Activated T-helper 1 cell treated with anti-CD3 and anti-CD28 coated beads, Interleukin-12 subunit alpha, Interleukin-12 subunit beta, Interleukin-2, Interleukin-4 antibody, amounts not matched to agents 30 ng/mL and 10 ng/mL and 1 ng/mL, durations not matched to agents 14 hours and 24 hours and 36 hours (primary cell): ENCODE measurements at regions of chr12 and their contacts with region 1.

Region 1: GRCh38 chr12:89352492-89353187 is at the start of gene DUSP6:
- DNase-seq: peak; percentile 92
- H3K4me3 Mint-ChIP-seq: peak within 1 kb of the TSS; percentile 98
- H3K27ac Mint-ChIP-seq: peak within 1 kb of the TSS; percentile 97
- H3K4me1 Mint-ChIP-seq: peaks cover 46% of the 10 kb centered on the region
- H3K27me3 Mint-ChIP-seq: peaks cover 3% of the 10 kb centered on the region
- total RNA-seq, gene DUSP6: 108 and 115 TPM in 2 replicates

Region 2: GRCh38 chr12:89019408-89020120 is 333.1 kb before region 1 on chr12:
- intact Hi-C with region 1: loop called (anchors 1 kb)
- DNase-seq: peak; percentile 73
- H3K4me3 Mint-ChIP-seq: no peak overlapping the region
- H3K27ac Mint-ChIP-seq: no peak overlapping the region
- H3K4me1 Mint-ChIP-seq: peaks cover 31% of the 10 kb centered on the region
- H3K27me3 Mint-ChIP-seq: peaks cover 12% of the 10 kb centered on the region

Region 3: DNA sequence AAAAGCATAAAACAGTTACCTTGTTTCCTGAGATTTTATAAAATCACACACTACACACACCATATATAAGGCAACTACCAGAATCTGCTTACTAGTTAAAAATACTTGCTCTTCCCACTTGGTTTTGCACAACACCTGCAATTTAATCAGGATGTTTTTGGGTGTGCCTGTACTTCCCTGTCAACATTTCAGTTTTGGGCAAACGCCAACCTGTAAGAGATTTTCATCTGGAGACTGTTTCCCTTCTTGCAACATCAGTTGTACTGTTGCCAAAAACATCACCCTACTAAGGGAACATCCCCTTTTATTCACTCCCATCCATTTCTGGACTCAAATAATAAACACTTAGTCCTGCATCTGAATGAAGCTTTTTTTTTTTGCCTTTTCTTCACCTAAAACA is 172.7 kb before region 1 on chr12:
- intact Hi-C with region 1: loop called (anchors 1 kb)
- DNase-seq: no peak
- H3K4me3 Mint-ChIP-seq: peak overlapping the region; percentile 48
- H3K27ac Mint-ChIP-seq: peak overlapping the region; percentile 95
- H3K4me1 Mint-ChIP-seq: peaks cover 62% of the 10 kb centered on the region
- H3K27me3 Mint-ChIP-seq: no peaks in the 10 kb centered on the region

Region 4: DNA sequence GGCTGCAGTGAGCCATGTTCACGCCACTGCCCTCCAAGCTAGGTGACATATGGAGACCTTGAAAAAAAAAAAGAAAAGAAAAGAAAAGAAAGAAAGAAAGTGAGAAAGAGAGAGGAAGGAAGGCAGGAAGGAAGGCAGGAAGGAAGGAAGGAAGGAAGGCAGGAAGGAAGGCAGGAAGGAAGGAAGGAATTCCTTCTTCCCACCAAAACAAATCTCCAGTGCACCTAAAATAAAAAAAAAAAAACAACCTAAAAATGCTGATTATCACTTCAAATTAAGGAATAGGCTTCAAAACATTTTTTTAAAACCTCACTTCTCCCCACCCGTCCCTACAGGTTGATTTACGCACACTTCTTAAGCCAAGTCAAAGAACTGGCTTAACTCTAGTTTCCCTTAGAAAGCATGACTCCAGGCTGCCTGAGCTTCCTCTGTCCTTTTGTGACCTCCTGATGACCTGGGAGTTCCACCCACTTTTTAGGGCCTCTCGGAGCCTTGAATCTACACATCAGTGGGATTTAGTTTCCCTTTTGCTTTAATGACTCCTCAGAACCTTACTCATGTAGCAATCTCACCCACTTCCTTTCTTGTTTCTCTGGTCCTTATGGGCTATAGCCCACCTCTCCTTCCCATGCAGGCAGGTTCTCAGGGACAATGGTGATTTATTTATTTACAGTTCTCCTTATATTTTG is 18.9 kb before region 1 on chr12:
- intact Hi-C with region 1: loop called (anchors 1 kb)
- DNase-seq: no peak
- H3K4me3 Mint-ChIP-seq: peak overlapping the region; percentile 46
- H3K27ac Mint-ChIP-seq: peak overlapping the region; percentile 76
- H3K4me1 Mint-ChIP-seq: peaks cover 26% of the 10 kb centered on the region
- H3K27me3 Mint-ChIP-seq: no peaks in the 10 kb centered on the region

Region 5: GRCh38 chr12:89461649-89462612 is 109.3 kb after region 1 on chr12:
- intact Hi-C with region 1: loop called (anchors 1 kb)
- DNase-seq: no peak
- H3K4me3 Mint-ChIP-seq: peak overlapping the region; percentile 60
- H3K27ac Mint-ChIP-seq: peak overlapping the region; percentile 36
- H3K4me1 Mint-ChIP-seq: peaks cover 43% of the 10 kb centered on the region
- H3K27me3 Mint-ChIP-seq: no peaks in the 10 kb centered on the region

Region 6: DNA sequence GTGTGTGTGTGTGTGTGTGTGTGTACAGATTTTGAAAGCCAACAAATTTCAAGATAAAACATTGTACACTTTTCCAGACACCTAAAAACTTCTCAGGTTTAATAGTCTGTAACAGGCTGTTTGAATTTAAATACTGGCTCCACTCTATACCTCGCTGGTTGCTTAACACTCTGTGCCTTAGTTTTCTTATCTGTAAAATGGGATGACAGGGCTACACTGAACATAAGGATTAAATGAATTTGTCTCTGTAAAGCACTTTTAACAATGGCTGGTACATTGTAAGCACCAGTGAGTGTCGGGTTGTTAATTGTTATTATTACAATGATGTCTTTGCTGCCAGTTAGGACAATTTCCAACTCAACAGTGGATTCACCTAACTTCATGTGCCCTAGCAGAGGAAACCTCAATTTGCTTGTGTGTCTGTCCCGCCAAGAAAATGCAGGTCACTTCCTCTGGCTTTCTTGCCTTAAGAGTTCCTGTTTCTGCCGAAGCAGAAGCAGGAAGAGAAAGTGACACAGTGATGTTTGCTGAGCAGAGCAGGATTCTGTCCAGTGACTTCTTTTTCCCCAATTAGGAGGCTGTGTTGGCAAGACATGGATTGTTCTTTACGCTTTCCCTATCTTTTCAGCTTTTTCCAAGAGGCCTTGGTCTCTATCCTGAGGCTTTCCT is 510.0 kb after region 1 on chr12:
- intact Hi-C with region 1: loop called (anchors 5 kb)
- DNase-seq: peak; percentile 44
- H3K4me3 Mint-ChIP-seq: peak overlapping the region; percentile 76
- H3K27ac Mint-ChIP-seq: peak overlapping the region; percentile 95
- H3K4me1 Mint-ChIP-seq: peaks cover 60% of the 10 kb centered on the region
- H3K27me3 Mint-ChIP-seq: no peaks in the 10 kb centered on the region